HCT116 (cell line): ENCODE measurements at regions of chr10 and their contacts with region 1.

Region 1: DNA sequence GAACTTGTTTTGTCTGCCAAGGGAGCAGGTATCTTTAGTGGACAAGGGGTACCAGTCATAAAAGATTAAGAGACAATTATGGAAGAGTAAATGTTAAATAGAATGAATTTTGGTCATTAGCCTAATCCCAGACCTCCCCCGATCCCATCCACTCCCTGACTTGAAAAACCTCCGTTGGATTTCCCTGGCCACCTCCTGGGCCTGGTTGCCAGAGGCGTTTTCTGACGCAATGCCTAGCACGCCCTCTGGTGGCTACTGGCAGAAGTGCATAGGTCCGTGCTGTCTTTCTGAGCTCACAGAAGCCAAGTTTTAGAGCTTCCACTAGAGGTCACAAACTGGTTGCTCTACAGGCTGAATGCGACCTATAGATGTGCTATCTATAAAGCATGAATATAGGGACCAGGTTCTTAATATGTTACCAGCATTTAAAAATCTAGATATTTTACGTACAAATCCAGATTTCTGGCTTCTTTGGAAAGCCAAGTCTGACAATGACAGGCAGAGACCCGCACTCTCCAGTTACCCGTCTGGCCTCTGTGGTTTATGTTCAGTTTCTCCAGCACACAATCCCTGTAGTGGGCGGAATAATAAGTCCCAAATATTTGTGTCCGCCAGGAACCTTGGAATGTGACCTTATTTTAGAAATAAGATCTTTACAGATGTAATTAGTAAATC is 39.8 kb downstream of the SPOCK2 start:
- DNase-seq: peak; percentile 91
- ATAC-seq: peak; percentile 91
- H3K4me3 ChIP-seq: no peak overlapping the region
- H3K27ac ChIP-seq: no peak overlapping the region
- H3K4me1 ChIP-seq: peaks cover 0 to 4% of the 10 kb centered on the region in 2 experiments; a peak in 1 of 4 replicates
- H3K27me3 ChIP-seq: no peaks in the 10 kb centered on the region
- CTCF ChIP-seq: peak; percentile 100
- POLR2A ChIP-seq: no peak
- RAD21 ChIP-seq: peak; percentile 100

Region 2: DNA sequence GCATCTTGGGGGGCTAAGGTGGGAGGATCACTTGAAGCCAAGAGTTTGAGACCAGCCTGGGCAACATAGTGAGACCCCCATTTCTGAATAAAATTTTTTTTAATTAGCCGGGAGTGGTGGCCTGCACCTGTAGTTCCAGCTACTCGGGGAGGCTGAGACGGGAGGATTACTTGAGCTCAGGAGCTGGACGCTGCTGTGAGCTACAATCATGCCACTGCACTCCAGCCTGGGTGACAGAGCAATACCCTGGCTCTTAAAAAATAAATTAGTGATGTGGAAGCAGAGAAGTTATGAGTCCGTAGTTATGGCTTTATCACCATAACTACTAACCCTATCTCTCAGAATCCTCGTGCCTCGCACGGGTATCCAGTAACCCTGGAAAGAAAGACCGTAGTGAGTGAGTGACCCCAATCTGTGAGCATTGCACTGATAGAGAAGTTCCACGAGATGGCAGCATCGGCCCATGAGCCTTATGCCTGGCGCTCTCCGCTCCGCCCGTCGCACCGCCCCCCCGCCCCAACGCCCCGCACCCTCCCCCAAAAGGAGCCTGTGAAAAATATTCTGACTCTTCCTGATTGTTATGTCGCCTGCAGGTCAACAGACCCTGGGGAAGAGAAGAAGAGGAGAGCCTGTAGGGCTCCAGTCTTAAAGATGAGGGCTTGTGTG is 734.4 kb before region 1 on chr10:
- CTCF ChIA-PET with region 1: interaction called, 4 read pairs
- POLR2A ChIA-PET with region 1: no interaction called
- RAD21 ChIA-PET with region 1: no interaction called
- intact Hi-C with region 1: loop called (anchors 5 kb)
- DNase-seq: peak; percentile 21
- ATAC-seq: peak; percentile 70
- H3K4me3 ChIP-seq: no peak overlapping the region
- H3K27ac ChIP-seq: no peak overlapping the region
- H3K4me1 ChIP-seq: peaks cover 3 to 10% of the 10 kb centered on the region in 2 experiments; a peak in 2 of 4 replicates
- H3K27me3 ChIP-seq: no peaks in the 10 kb centered on the region
- CTCF ChIP-seq: peak; percentile 65 to 76 (median 72)
- POLR2A ChIP-seq: no peak
- RAD21 ChIP-seq: peak; percentile 85

Region 3: DNA sequence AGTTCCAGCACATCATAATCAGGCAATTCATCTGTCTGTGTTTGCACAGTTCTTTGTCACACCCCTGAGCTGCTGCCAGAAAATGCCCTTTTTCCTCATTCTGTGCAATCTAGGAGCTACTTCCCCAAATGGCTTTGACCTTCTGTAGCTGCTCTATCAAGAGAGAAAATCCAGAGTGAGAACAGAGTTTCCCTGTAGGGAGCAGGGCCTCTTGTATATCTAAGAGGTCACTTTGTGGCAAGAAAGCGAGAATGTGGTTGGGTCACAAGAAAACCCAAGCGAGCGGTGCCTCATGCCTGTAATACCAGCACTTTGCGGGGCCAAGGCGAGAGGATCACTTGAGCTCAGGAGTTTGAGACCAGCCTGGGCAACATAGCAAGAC is 705.2 kb before region 1 on chr10:
- CTCF ChIA-PET with region 1: no interaction called
- POLR2A ChIA-PET with region 1: no interaction called
- RAD21 ChIA-PET with region 1: no interaction called
- intact Hi-C with region 1: no loop called
- DNase-seq: no peak
- ATAC-seq: no peak
- H3K4me3 ChIP-seq: no peak overlapping the region
- H3K27ac ChIP-seq: no peak overlapping the region
- H3K4me1 ChIP-seq: peaks cover 22 to 32% of the 10 kb centered on the region in 2 experiments
- H3K27me3 ChIP-seq: no peaks in the 10 kb centered on the region
- CTCF ChIP-seq: no peak
- POLR2A ChIP-seq: no peak
- RAD21 ChIP-seq: no peak

Region 4: GRCh38 chr10:71957546-71958275 is 90.9 kb before region 1 on chr10:
- CTCF ChIA-PET with region 1: interaction called, 35 read pairs
- POLR2A ChIA-PET with region 1: no interaction called
- RAD21 ChIA-PET with region 1: interaction called, 7 to 10 read pairs
- intact Hi-C with region 1: loop called (anchors 1 kb)
- DNase-seq: no peak
- ATAC-seq: no peak
- H3K4me3 ChIP-seq: no peak overlapping the region
- H3K27ac ChIP-seq: no peak overlapping the region
- H3K4me1 ChIP-seq: peaks cover 0 to 7% of the 10 kb centered on the region in 2 experiments; a peak in 2 of 4 replicates
- H3K27me3 ChIP-seq: no peaks in the 10 kb centered on the region
- CTCF ChIP-seq: peak in 1 of 3 experiments; percentile 27; a peak in 3 of 6 replicates
- POLR2A ChIP-seq: no peak
- RAD21 ChIP-seq: no peak

Region 5: GRCh38 chr10:71990706-71991269 is 57.8 kb before region 1 on chr10:
- CTCF ChIA-PET with region 1: no interaction called
- POLR2A ChIA-PET with region 1: no interaction called
- RAD21 ChIA-PET with region 1: no interaction called
- intact Hi-C with region 1: no loop called
- DNase-seq: no peak
- ATAC-seq: no peak
- H3K4me3 ChIP-seq: no peak overlapping the region
- H3K27ac ChIP-seq: no peak overlapping the region
- H3K4me1 ChIP-seq: no peaks in the 10 kb centered on the region
- H3K27me3 ChIP-seq: no peaks in the 10 kb centered on the region
- CTCF ChIP-seq: no peak
- POLR2A ChIP-seq: no peak
- RAD21 ChIP-seq: no peak

Region 6: GRCh38 chr10:72061491-72061890 is 12.9 kb after region 1 on chr10:
- CTCF ChIA-PET with region 1: interaction called, 16 read pairs
- POLR2A ChIA-PET with region 1: no interaction called
- RAD21 ChIA-PET with region 1: no interaction called
- intact Hi-C with region 1: no loop called
- DNase-seq: no peak
- ATAC-seq: peak; percentile 72
- H3K4me3 ChIP-seq: no peak overlapping the region
- H3K27ac ChIP-seq: no peak overlapping the region
- H3K4me1 ChIP-seq: peaks cover 4 to 10% of the 10 kb centered on the region in 2 experiments; a peak in 2 of 4 replicates
- H3K27me3 ChIP-seq: no peaks in the 10 kb centered on the region
- CTCF ChIP-seq: peak; percentile 42 to 60 (median 50); a peak in 4 of 6 replicates
- POLR2A ChIP-seq: no peak
- RAD21 ChIP-seq: peak; percentile 59

Region 7: DNA sequence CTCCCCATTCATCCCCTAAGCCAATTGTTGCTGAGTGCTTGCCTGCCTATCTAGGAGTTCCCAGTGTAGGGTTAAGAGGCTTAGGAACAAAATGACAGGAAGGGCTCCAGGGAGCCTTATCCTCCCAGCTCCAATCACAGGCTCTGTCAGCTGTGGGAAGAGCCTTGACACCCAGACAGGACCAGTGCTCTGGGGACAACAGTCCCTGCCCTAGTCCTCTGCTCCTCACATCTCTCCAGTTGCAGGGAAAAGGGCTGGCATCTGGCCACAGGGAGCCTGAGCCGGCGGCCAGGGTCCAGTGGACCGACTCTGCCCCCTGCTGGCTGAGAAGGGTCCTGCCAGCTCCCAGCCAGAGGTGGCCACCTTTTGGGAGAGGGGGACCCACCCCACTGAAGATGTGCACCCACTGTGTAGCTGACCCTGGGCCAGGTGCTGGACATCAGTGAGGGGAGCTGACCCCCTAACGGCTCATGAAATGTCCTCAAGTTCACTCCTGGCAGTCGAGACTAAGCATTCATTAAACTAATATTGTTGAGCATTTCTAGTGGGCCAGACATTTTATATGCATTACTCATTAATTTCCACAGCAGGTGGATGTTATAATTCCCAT is 288.5 kb after region 1 on chr10:
- CTCF ChIA-PET with region 1: interaction called, 6 read pairs
- POLR2A ChIA-PET with region 1: no interaction called
- RAD21 ChIA-PET with region 1: interaction called in 1 of 2 experiments, 4 read pairs
- intact Hi-C with region 1: loop called (anchors 1 kb)
- DNase-seq: no peak
- ATAC-seq: peak; percentile 72
- H3K4me3 ChIP-seq: no peak overlapping the region
- H3K27ac ChIP-seq: peak overlapping the region; percentile 35; the same call in 1 of the 2 replicates
- H3K4me1 ChIP-seq: peaks cover 13 to 24% of the 10 kb centered on the region in 2 experiments
- H3K27me3 ChIP-seq: no peaks in the 10 kb centered on the region
- CTCF ChIP-seq: peak in 2 of 3 experiments; percentile 96 to 98; a peak in 4 of 6 replicates
- POLR2A ChIP-seq: no peak
- RAD21 ChIP-seq: no peak